Activated CD4-positive, alpha-beta T cell treated with anti-CD3 and anti-CD28 coated beads, Interleukin-2, amount 10 ng/mL, durations not matched to agents 24 days and 14 days (primary cell): ENCODE measurements at regions of chr2 and their contacts with region 1.

Region 1: GRCh38 chr2:130342533-130343275 is at the start of gene IMP4:
- DNase-seq: peak; percentile 99
- H3K4me3 Mint-ChIP-seq: peak within 1 kb of the TSS; percentile 97
- H3K27ac Mint-ChIP-seq: peak within 1 kb of the TSS; percentile 97
- H3K4me1 Mint-ChIP-seq: peaks cover 24% of the 10 kb centered on the region
- H3K27me3 Mint-ChIP-seq: no peaks in the 10 kb centered on the region
- total RNA-seq, gene IMP4: 177 and 178 TPM in 2 replicates

Region 2: DNA sequence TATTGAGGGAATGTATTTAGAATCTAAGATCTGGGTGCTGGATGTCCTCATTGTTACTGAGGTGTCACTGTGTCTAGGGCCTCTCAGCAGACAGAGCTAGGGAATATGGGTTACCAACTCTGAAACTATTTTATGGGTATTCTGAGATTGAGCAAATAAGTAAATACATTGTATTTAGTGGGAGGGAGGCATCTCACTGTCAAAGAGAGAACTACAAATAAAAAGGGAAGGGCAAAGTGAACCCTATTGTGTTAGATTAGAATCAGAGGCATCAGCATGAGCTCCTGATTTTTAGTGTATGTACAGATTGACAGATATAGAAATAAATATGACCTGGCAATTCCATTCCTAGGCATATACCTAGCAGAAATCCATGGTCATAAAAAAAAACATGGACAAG is 397.2 kb before region 1 on chr2:
- intact Hi-C with region 1: no loop called
- DNase-seq: no peak
- H3K4me3 Mint-ChIP-seq: no peak overlapping the region
- H3K27ac Mint-ChIP-seq: no peak overlapping the region
- H3K4me1 Mint-ChIP-seq: no peaks in the 10 kb centered on the region
- H3K27me3 Mint-ChIP-seq: peaks cover 11% of the 10 kb centered on the region

Region 3: GRCh38 chr2:130181325-130181879 is 161.3 kb before region 1 on chr2 and contains the start of gene SMPD4:
- intact Hi-C with region 1: loop called (anchors 1 kb)
- DNase-seq: peak; percentile 99
- H3K4me3 Mint-ChIP-seq: peak within 1 kb of the TSS; percentile 93
- H3K27ac Mint-ChIP-seq: peak within 1 kb of the TSS; percentile 96
- H3K4me1 Mint-ChIP-seq: peaks cover 7% of the 10 kb centered on the region
- H3K27me3 Mint-ChIP-seq: no peaks in the 10 kb centered on the region
- total RNA-seq, gene SMPD4: 86.0 and 91.1 TPM in 2 replicates

Region 4: DNA sequence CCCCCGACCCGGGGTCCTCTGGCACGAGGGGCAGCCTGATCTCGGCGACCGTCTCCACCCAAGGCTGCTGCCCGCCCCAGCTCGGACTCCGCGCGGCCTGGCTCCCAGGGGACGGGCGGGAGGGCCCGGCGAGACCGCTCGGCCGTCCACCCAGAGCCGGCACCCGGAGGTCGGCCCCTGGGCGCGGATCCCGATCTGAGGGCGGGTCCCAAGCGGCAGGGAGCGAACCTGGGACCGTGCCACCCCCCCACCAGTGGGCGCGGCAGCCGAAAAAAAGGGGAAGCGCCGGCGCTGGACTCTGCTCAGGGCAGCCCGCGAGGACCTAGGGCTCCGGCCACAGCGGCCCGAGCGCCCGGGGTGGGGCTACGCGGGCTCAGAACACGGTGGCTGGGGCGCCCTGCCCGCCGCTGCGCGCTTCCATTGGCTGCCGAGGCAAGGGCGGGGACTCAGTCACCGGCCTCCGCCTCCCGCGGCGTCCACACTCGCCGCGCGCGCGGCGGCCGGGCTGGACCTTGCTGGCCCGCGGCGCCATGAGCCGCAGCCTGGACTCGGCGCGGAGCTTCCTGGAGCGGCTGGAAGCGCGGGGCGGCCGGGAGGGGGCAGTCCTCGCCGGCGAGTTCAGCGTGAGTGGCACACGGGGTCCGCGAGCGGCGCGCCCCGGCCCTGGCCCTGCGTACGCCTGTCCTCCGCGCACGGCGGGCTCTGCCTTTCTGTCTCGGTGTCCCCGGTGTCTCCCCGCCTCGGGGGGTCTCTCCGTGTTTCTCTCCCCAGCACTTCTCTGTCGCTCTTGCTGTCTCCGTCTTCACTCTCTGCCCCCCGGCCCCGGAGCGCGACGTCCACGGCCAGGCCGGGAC is 13.1 kb after region 1 on chr2 and contains the start of gene PTPN18:
- intact Hi-C with region 1: loop called (anchors 1 kb)
- DNase-seq: peak; percentile 91
- H3K4me3 Mint-ChIP-seq: peak within 1 kb of the TSS; percentile 86
- H3K27ac Mint-ChIP-seq: peak within 1 kb of the TSS; percentile 15
- H3K4me1 Mint-ChIP-seq: peaks cover 12% of the 10 kb centered on the region
- H3K27me3 Mint-ChIP-seq: no peaks in the 10 kb centered on the region
- total RNA-seq, gene PTPN18: 61.7 and 61.9 TPM in 2 replicates

Region 5: DNA sequence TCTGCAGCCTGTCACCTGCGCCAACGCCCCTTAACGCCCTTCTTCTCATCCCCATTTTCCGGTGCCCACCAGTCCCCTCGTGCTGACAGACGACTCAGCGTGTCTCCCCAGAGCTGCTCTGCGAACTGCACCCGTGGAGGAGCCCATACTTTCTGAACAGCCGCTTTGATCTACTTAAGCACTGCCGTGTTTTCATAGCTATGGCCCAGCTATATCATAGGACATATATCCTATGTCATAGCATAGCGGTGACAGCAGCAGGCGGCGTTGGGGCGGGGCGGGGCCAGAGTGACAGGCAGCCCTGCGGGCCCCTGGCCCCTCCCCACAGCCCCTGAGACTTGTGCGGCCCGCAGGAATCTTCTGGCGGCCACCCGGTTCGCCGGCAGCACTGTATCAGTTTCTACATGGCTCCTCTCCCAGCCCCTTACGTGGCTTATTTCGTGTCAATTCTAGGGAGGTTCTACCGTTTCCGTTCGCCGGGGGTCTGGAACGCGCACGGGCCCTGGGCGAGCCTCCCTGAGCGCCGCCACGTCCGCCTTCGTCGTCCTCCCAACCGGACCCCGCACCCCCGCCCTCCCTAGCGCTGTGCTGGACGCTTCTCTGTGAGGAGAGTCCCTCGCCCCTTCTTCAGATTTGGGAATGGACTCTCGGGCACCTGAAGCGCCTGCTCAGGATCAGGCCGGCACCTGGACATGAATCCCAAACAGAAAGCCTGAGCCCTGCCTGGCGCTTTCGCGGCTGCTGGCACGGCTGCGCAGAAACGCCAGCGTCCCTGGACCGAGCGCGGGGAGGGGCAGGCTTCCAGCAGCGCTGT is 48.6 kb after region 1 on chr2:
- intact Hi-C with region 1: loop called (anchors 1 kb)
- DNase-seq: peak; percentile 92
- H3K4me3 Mint-ChIP-seq: peak overlapping the region; percentile 90
- H3K27ac Mint-ChIP-seq: peak overlapping the region; percentile 88
- H3K4me1 Mint-ChIP-seq: peaks cover 11% of the 10 kb centered on the region
- H3K27me3 Mint-ChIP-seq: peaks cover 3% of the 10 kb centered on the region